A549 (cell line): ENCODE measurements at regions of chr17 and their contacts with region 1.

Region 1: GRCh38 chr17:57649731-57650484 is 95.2 kb downstream of the CCDC182 start:
- DNase-seq: peak; percentile 50 to 72
- ATAC-seq: peak; percentile 76 to 77; a peak in 5 of 6 replicates
- H3K4me3 ChIP-seq: no peak overlapping the region
- H3K27ac ChIP-seq: peak overlapping the region; percentile 59 to 84
- H3K4me1 ChIP-seq: peaks cover 34% of the 10 kb centered on the region
- CTCF ChIP-seq: no peak
- EP300 ChIP-seq: no peak
- POLR2A ChIP-seq: no peak
- RAD21 ChIP-seq: no peak

Region 2: DNA sequence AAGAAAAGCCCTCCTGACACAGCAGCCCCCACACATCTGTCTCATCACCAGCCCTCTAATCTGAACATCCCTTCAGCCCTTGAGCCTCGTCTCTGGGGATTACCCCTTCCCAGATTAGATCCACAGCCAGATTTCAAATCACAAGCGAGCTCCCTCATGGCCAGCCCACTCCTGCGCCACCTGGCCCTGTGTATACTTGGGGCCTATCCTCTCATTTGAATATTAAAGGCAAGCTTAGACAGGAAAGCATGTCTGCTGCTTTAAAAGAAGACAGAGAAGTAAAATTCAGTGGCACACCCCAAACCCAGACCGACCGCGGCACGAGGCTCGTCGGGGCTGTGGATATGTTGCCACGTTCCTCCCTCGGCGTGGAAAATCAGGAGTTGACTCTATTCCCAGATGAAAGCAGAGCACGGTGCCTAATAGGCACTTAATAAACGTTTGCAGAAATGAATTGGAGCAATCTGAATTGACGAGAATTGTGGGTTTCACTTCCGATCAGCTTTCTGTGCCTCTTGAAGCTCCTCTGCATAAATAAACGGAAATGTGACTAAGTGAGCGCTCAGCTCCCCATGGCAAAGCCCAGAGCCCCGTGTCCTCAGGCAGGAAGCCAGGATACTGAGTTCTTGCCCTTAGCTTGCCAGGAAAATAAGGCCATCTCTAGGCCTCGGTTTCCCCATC is 12.8 kb before region 1 on chr17:
- CTCF ChIA-PET with region 1: interaction called, 10 read pairs
- POLR2A ChIA-PET with region 1: no interaction called
- DNase-seq: no peak
- ATAC-seq: no peak
- H3K4me3 ChIP-seq: no peak overlapping the region
- H3K27ac ChIP-seq: no peak overlapping the region
- H3K4me1 ChIP-seq: no peaks in the 10 kb centered on the region
- CTCF ChIP-seq: no peak
- EP300 ChIP-seq: no peak
- POLR2A ChIP-seq: no peak
- RAD21 ChIP-seq: no peak